BJ (cell line): ENCODE measurements at regions of chr3 and their contacts with region 1.

Region 1: DNA sequence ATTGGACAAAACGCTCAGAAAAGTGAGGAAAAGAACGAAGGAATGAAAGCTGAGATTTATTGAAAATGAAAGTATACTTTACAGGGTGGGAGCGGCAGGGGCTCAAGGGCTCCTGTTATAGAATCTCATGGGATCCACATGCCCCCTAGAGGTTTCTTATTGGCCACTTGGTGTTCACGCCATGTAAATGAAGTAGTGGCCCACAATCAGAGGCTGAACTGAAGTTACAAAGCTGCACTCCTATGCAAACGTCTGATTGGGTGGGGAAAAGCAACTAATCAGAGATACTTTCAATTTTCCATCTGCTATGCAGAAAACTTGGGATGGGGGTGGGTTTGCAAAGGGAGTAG is 216.7 kb downstream of the PTPRG start:
- DNase-seq: no peak
- H3K4me3 ChIP-seq: no peak overlapping the region
- H3K27me3 ChIP-seq: no peaks in the 10 kb centered on the region
- CTCF ChIP-seq: no peak

Region 2: GRCh38 chr3:61985020-61985419 is 206.9 kb after region 1 on chr3:
- CTCF ChIA-PET with region 1: no interaction called
- POLR2A ChIA-PET with region 1: no interaction called
- DNase-seq: peak; percentile 39
- H3K4me3 ChIP-seq: no peak overlapping the region
- H3K27me3 ChIP-seq: no peaks in the 10 kb centered on the region
- CTCF ChIP-seq: no peak

Region 3: DNA sequence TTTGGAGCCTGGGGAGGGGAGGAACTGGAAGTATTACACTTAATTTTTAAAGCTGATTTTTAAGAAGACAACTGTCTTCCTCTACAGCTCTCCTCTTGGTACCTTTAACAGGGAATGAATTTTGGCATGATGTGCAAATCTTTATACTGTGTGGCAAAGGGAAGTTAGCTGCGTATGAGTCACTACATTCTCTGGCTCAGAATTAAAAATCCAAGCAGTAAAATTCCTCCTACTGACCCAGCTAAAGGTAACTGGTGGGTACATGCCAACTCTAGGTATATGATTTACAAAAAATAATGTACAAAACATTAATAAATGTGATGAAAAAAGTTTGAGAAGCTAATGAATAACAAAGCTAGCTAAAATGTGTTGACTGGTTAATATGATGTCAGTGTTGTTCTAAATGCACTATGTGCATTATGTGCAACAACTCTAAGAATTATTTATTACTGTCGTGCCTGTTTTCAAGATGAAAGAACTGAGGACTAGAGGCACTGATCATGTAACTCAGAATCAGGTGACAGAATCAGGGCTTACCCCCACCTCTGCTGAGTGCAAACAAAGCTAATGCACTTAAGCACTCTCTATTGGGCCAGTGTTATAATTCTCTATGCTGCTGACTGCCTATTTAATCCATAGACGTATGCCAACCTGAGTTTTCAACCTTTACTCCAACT is 1291.8 kb after region 1 on chr3:
- CTCF ChIA-PET with region 1: no interaction called
- POLR2A ChIA-PET with region 1: interaction called, 10 read pairs
- DNase-seq: no peak
- H3K4me3 ChIP-seq: no peak overlapping the region
- H3K27me3 ChIP-seq: no peaks in the 10 kb centered on the region
- CTCF ChIP-seq: no peak